Activated CD4-positive, alpha-beta T cell treated with anti-CD3 and anti-CD28 coated beads for 36 hours (primary cell): ENCODE measurements at regions of chr18 and their contacts with region 1.

Region 1: GRCh38 chr18:22977847-22978701 is 44.9 kb downstream of the RBBP8 start:
- DNase-seq: no peak
- ATAC-seq: peak; percentile 83
- H3K4me3 Mint-ChIP-seq: peak overlapping the region; percentile 46
- H3K27ac Mint-ChIP-seq: peak overlapping the region; percentile 73
- H3K4me1 Mint-ChIP-seq: peaks cover 20% of the 10 kb centered on the region
- H3K27me3 Mint-ChIP-seq: no peaks in the 10 kb centered on the region

Region 2: GRCh38 chr18:22451796-22452195 is 526.3 kb before region 1 on chr18:
- CTCF ChIA-PET with region 1: no interaction called
- POLR2A ChIA-PET with region 1: no interaction called
- intact Hi-C with region 1: no loop called
- DNase-seq: no peak
- ATAC-seq: no peak
- H3K4me3 Mint-ChIP-seq: no peak overlapping the region
- H3K27ac Mint-ChIP-seq: no peak overlapping the region
- H3K4me1 Mint-ChIP-seq: no peaks in the 10 kb centered on the region
- H3K27me3 Mint-ChIP-seq: peaks cover 6% of the 10 kb centered on the region

Region 3: DNA sequence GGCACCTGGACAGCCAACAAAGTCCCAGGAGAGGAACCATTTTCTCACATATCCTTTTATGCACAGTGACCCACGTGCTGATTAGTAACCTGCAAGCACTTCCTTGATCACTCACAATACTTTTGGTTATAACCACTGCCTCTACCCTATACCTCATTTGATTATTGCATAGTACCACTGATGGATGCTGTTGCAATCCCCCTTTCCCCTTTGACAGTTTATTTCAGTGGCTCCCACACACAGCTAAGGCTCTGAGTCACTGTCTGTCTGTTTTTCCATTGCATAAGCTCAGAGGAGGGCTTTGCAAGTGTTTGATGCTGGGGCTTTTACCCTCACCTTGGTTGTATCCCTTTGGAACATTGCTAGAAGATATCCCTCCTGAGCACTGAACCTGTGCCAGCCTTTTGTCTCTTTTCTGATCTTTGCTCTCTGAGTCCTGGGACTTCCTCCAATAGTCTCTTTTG is 146.6 kb before region 1 on chr18:
- CTCF ChIA-PET with region 1: no interaction called
- POLR2A ChIA-PET with region 1: no interaction called
- intact Hi-C with region 1: loop called in 1 of 2 experiments (anchors 10 kb)
- DNase-seq: peak; percentile 23
- ATAC-seq: peak; percentile 88
- H3K4me3 Mint-ChIP-seq: no peak overlapping the region
- H3K27ac Mint-ChIP-seq: peak overlapping the region; percentile 44
- H3K4me1 Mint-ChIP-seq: peaks cover 14% of the 10 kb centered on the region
- H3K27me3 Mint-ChIP-seq: peaks cover 10% of the 10 kb centered on the region

Region 4: DNA sequence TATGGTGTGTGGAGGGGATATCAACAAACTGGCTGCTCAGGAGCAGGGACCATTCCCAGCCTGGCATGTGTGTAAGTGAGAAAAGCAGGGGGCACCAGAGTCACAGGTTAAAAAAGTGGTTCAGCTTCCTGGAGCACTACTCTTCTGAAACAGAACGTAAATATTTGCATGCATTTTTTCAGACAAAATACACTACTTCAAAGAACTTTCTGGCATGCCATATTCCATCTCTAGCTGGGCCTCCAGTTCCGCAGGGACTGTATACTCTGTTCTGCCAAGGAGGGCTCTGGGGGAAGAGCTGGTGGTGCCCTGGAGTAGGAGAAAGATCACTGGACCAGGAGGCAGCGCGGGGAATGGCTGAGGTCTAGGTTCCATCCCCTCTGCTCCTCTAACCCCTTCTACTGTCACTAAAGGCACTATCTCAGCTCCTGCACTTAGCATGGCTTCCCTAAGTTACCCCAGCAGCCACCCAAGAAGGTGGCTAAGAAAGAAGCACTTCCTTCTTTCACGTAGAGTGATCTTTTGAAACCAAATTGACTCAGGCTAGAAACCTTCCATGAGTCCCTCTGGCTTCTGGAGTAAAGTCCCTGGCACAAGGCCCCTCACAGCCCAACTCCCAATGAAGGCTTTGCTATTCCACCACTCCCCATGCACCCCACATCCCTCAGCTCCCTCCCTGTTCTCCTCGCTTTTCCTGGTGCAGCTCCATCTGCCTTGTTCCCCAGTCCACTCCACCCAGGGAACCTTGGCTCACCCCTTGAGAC is 99.6 kb after region 1 on chr18:
- CTCF ChIA-PET with region 1: no interaction called
- POLR2A ChIA-PET with region 1: no interaction called
- intact Hi-C with region 1: no loop called
- DNase-seq: no peak
- ATAC-seq: no peak
- H3K4me3 Mint-ChIP-seq: no peak overlapping the region
- H3K27ac Mint-ChIP-seq: no peak overlapping the region
- H3K4me1 Mint-ChIP-seq: peaks cover 23% of the 10 kb centered on the region
- H3K27me3 Mint-ChIP-seq: no peaks in the 10 kb centered on the region